Thyroid gland (tissue), 4 donors: ENCODE measurements at regions of chr12 and their contacts with region 1.

Region 1: GRCh38 chr12:117836999-117837736 is 131.6 kb downstream of the KSR2 start:
- DNase-seq: peak; percentile 81 to 83
- H3K4me3 ChIP-seq: no peak overlapping the region
- H3K27ac ChIP-seq: no peak overlapping the region
- H3K4me1 ChIP-seq: no peaks in the 10 kb centered on the region
- H3K27me3 ChIP-seq: no peaks in the 10 kb centered on the region
- CTCF ChIP-seq: peak; percentile 84 to 95 (median 92)
- POLR2A ChIP-seq: no peak

Region 2: GRCh38 chr12:117236456-117237001 is 600.6 kb before region 1 on chr12:
- intact Hi-C with region 1: loop called (anchors 5 kb)
- DNase-seq: peak; percentile 87 to 91
- H3K4me3 ChIP-seq: no peak overlapping the region
- H3K27ac ChIP-seq: no peak overlapping the region
- H3K4me1 ChIP-seq: no peaks in the 10 kb centered on the region
- H3K27me3 ChIP-seq: no peaks in the 10 kb centered on the region
- CTCF ChIP-seq: peak; percentile 46 to 81 (median 60)
- POLR2A ChIP-seq: no peak

Region 3: GRCh38 chr12:117596968-117597367 is 240.2 kb before region 1 on chr12:
- intact Hi-C with region 1: loop called (anchors 10 kb)
- DNase-seq: no peak
- H3K4me3 ChIP-seq: no peak overlapping the region
- H3K27ac ChIP-seq: no peak overlapping the region
- H3K4me1 ChIP-seq: no peaks in the 10 kb centered on the region
- H3K27me3 ChIP-seq: no peaks in the 10 kb centered on the region
- CTCF ChIP-seq: no peak
- POLR2A ChIP-seq: no peak

Region 4: DNA sequence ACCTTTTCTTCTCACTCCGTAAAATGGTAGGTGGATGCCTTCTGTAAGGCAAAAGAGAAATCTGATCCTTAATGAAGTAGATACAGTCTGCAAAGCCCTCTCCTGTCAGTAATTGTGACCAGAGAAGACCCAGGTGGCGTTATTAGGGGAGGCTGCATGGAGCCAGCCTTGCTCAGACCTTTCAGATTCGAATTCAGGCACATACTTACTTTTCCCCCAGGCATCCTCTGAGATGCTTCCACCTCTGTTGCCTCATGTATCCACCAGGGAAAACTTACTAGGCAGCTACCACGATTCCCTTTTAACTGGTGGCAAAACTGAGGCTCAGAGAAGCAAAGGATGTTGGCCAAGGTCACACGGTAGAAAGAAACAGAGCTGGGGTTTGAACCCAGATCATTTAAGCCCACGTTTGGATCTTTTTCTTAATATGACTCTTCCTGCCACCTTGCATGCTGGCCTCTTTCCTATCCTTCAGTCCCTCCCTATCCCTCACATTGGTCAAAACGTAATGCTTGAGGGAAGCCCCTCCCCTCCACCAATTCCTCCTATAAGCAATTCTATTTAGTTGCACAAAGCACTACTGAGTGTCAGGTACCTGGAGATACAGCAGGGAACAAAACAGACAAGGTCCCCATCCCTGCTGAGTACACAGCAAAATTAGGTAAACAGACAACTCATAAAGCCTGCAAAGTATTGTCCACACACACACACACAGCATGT is 47.8 kb before region 1 on chr12:
- intact Hi-C with region 1: no loop called
- DNase-seq: no peak
- H3K4me3 ChIP-seq: no peak overlapping the region
- H3K27ac ChIP-seq: no peak overlapping the region
- H3K4me1 ChIP-seq: no peaks in the 10 kb centered on the region
- H3K27me3 ChIP-seq: no peaks in the 10 kb centered on the region
- CTCF ChIP-seq: no peak
- POLR2A ChIP-seq: no peak